A673 (cell line): ENCODE measurements at regions of chr11 and their contacts with region 1.

Region 1: GRCh38 chr11:12043959-12044819 is 35.8 kb upstream of the DKK3 start:
- DNase-seq: peak; percentile 69
- H3K4me3 ChIP-seq: no peak overlapping the region
- H3K27ac ChIP-seq: no peak overlapping the region
- H3K4me1 ChIP-seq: no peaks in the 10 kb centered on the region
- H3K27me3 ChIP-seq: no peaks in the 10 kb centered on the region
- CTCF ChIP-seq: peak; percentile 85

Region 2: GRCh38 chr11:11798586-11799438 is 245.4 kb before region 1 on chr11:
- CTCF ChIA-PET with region 1: interaction called, 7 read pairs
- POLR2A ChIA-PET with region 1: no interaction called
- intact Hi-C with region 1: loop called (anchors 2 kb)
- DNase-seq: peak; percentile 75
- H3K4me3 ChIP-seq: no peak overlapping the region
- H3K27ac ChIP-seq: no peak overlapping the region
- H3K4me1 ChIP-seq: no peaks in the 10 kb centered on the region
- H3K27me3 ChIP-seq: peaks cover 20% of the 10 kb centered on the region
- CTCF ChIP-seq: peak; percentile 89

Region 3: GRCh38 chr11:11931461-11932055 is 112.6 kb before region 1 on chr11:
- CTCF ChIA-PET with region 1: interaction called, 15 read pairs
- POLR2A ChIA-PET with region 1: no interaction called
- intact Hi-C with region 1: loop called (anchors 1 kb)
- DNase-seq: peak; percentile 68
- H3K4me3 ChIP-seq: no peak overlapping the region
- H3K27ac ChIP-seq: no peak overlapping the region
- H3K4me1 ChIP-seq: no peaks in the 10 kb centered on the region
- H3K27me3 ChIP-seq: no peaks in the 10 kb centered on the region
- CTCF ChIP-seq: peak; percentile 71

Region 4: GRCh38 chr11:12235947-12236743 is 192.0 kb after region 1 on chr11:
- CTCF ChIA-PET with region 1: interaction called, 3 read pairs
- POLR2A ChIA-PET with region 1: no interaction called
- intact Hi-C with region 1: loop called (anchors 1 kb)
- DNase-seq: peak; percentile 67
- H3K4me3 ChIP-seq: no peak overlapping the region
- H3K27ac ChIP-seq: no peak overlapping the region
- H3K4me1 ChIP-seq: no peaks in the 10 kb centered on the region
- H3K27me3 ChIP-seq: no peaks in the 10 kb centered on the region
- CTCF ChIP-seq: peak; percentile 61

Region 5: GRCh38 chr11:12281571-12282478 is 237.6 kb after region 1 on chr11:
- CTCF ChIA-PET with region 1: interaction called, 11 read pairs
- POLR2A ChIA-PET with region 1: no interaction called
- intact Hi-C with region 1: loop called (anchors 1 kb)
- DNase-seq: peak; percentile 80
- H3K4me3 ChIP-seq: no peak overlapping the region
- H3K27ac ChIP-seq: no peak overlapping the region
- H3K4me1 ChIP-seq: no peaks in the 10 kb centered on the region
- H3K27me3 ChIP-seq: no peaks in the 10 kb centered on the region
- CTCF ChIP-seq: peak; percentile 88

Region 6: GRCh38 chr11:12536566-12536965 is 492.4 kb after region 1 on chr11:
- CTCF ChIA-PET with region 1: interaction called, 15 read pairs
- POLR2A ChIA-PET with region 1: no interaction called
- intact Hi-C with region 1: no loop called
- DNase-seq: no peak
- H3K4me3 ChIP-seq: no peak overlapping the region
- H3K27ac ChIP-seq: no peak overlapping the region
- H3K4me1 ChIP-seq: no peaks in the 10 kb centered on the region
- H3K27me3 ChIP-seq: no peaks in the 10 kb centered on the region
- CTCF ChIP-seq: no peak